ENCODE measurements at regions of chr18 and their contacts with region 1.

Region 1: GRCh38 chr18:40882468-40882867 is 1072.6 kb upstream of the PIK3C3 start:
- DNase-seq: no peak
- ATAC-seq: no peak
- H3K4me3 ChIP-seq: no peak overlapping the region
- H3K27ac ChIP-seq: no peak overlapping the region
- H3K4me1 ChIP-seq: no peaks in the 10 kb centered on the region
- H3K27me3 ChIP-seq: no peaks in the 10 kb centered on the region
- CTCF ChIP-seq: no peak

Region 2: DNA sequence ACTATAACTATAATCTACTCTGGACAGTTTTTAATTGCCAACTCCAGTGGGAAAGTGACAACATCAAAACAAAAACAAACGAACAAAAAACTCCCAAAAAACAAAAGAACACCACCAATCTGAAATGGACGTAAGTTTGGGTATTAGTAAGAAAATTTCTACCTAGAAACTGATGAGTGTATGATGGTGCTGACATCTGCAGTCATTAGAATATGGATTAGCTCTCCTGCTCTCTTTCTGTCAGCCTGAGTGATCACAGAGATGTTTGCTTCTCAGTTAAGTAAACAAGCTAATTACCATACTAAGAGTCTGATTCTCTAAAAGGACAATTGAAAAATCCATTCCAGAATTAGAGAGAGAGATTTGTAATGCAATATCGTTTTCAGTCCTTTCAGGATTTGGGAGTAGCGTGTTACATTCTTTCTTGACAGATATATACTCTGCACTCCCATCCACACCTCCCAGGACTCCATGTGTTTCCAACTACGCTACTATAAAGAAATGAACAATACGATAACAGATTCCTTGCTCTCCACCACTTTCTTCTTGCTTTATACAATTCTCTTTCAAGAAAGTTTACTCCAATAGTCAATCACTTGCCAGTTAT is 274.8 kb before region 1 on chr18:
- intact Hi-C with region 1: no loop called
- DNase-seq: no peak
- ATAC-seq: no peak
- H3K4me3 ChIP-seq: no peak overlapping the region
- H3K27ac ChIP-seq: no peak overlapping the region
- H3K4me1 ChIP-seq: no peaks in the 10 kb centered on the region
- H3K27me3 ChIP-seq: no peaks in the 10 kb centered on the region
- CTCF ChIP-seq: no peak

Region 3: GRCh38 chr18:40676668-40677067 is 205.8 kb before region 1 on chr18:
- intact Hi-C with region 1: no loop called
- DNase-seq: no peak
- ATAC-seq: no peak
- H3K4me3 ChIP-seq: no peak overlapping the region
- H3K27ac ChIP-seq: no peak overlapping the region
- H3K4me1 ChIP-seq: no peaks in the 10 kb centered on the region
- H3K27me3 ChIP-seq: no peaks in the 10 kb centered on the region
- CTCF ChIP-seq: no peak

Region 4: DNA sequence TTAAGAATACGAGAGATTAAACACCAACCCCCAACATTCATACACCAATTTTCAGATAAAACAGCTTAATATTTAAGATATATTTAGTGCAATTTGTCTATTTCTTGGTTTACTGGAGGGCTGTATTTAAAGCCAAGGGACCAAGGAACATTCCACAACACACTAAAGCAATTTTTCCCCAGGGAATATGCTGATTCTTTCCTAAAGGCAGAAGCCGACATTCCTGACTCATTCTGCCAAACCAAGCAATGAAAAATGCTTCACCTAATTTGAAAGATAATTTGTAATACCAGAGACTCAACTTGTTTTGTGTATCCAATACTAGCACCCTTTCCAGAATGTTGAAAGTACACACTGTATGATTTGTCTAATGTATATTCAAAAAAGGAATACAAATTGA is 195.1 kb before region 1 on chr18:
- intact Hi-C with region 1: no loop called
- DNase-seq: no peak
- ATAC-seq: no peak
- H3K4me3 ChIP-seq: no peak overlapping the region
- H3K27ac ChIP-seq: no peak overlapping the region
- H3K4me1 ChIP-seq: no peaks in the 10 kb centered on the region
- H3K27me3 ChIP-seq: no peaks in the 10 kb centered on the region
- CTCF ChIP-seq: no peak

Region 5: GRCh38 chr18:40789286-40789685 is 93.2 kb before region 1 on chr18:
- intact Hi-C with region 1: no loop called
- DNase-seq: no peak
- ATAC-seq: no peak
- H3K4me3 ChIP-seq: no peak overlapping the region
- H3K27ac ChIP-seq: no peak overlapping the region
- H3K4me1 ChIP-seq: no peaks in the 10 kb centered on the region
- H3K27me3 ChIP-seq: no peaks in the 10 kb centered on the region
- CTCF ChIP-seq: no peak

Region 6: GRCh38 chr18:40810371-40810770 is 72.1 kb before region 1 on chr18:
- intact Hi-C with region 1: loop called in 1 of 2 experiments (anchors 10 kb)
- DNase-seq: no peak
- ATAC-seq: no peak
- H3K4me3 ChIP-seq: no peak overlapping the region
- H3K27ac ChIP-seq: no peak overlapping the region
- H3K4me1 ChIP-seq: no peaks in the 10 kb centered on the region
- H3K27me3 ChIP-seq: no peaks in the 10 kb centered on the region
- CTCF ChIP-seq: no peak